HEK293T (cell line): ENCODE measurements at regions of chr19 and their contacts with region 1.

Region 1: DNA sequence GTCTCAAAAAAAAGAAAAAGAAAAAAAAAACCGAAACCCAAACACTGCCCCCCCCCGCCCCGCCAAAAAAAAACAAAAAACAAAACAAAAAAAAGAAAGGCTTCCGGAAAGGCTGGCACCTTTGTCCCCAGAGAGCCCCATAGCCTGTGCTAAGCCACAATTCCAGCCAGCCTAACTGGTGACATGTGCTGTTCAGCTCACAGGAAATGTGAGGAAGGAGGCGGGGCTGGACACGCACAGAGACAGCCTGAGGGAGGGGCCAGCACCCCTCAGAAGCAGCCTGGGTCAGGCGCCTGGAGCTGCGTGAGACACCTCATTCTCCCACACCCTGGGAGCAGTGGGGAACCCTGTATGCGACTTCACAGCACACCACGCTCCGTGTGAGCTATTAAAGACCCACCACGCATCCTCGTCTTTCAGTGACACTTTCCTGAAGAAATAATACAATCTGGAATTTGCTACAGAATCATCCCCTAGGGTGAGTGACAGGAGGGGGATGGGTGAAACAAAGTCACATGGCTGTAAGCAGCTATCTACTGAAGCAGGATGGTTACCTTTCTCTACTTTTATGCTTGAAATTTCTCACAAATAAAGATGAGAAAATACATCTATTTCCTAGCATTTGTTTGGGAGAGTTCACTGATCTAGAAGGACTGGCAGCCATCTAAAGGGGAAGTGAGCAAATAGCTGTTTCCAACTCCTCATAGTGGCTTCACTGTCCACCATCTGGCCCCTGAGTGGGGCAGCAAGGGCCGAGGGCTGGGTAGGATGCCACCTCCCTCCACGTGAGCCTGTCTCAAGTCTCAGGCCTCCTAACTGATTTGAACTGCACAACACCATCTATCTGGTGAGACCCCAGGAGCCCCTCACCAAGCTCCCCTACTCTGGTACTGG is 12.3 kb upstream of the SLC35E1 start:
- DNase-seq: peak; percentile 70

Region 2: DNA sequence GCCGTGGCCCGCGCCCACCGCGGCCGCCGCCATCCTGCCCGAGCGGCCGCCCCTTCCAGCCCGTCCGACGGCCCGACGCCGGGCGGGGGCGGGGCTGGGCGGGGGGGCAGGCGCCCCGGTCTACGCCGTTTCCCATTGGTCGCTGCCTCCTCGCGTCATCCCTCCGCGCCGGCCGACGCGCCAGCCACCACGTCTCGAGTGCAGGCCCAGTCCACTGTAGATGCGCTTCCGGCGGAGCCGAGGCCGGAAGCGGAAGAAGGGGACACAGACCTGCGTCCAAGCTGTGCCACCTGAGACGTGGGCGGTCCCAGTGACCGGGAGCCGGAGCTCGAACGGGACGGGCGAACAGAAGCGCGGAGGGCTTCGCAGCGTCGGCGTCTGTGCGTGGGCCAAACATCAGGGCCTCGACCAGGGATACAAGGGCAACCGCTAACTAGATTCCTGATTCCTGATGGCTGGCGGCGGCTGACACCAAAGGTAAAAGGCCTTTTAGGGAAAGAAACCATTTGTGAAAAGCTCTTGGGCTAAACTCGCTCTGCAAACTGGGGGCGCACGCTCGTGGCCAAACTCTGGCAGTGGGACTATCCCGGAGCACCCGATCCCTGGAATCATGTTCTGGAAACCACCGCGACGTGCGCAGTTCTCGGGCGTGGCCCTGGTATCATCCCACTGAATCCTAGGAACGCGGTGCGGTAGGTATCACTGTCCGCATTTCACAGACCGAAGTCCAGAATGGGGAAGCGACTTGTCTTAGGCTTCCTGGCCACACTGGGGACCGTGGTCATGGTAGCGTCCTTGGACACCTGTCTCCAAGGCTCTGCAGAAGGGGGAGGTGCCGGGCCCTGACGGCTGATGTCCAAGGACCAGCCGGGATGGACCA is 11.9 kb before region 1 on chr19 and contains the start of gene SLC35E1:
- CTCF ChIA-PET with region 1: interaction called, 6 read pairs
- POLR2A ChIA-PET with region 1: interaction called, 10 read pairs
- DNase-seq: peak; percentile 100

Region 3: GRCh38 chr19:16628183-16628983 is 43.9 kb after region 1 on chr19 and contains the start of gene MED26:
- CTCF ChIA-PET with region 1: no interaction called
- POLR2A ChIA-PET with region 1: interaction called, 10 read pairs
- DNase-seq: peak; percentile 99